GM18951 (cell line): ENCODE measurements at regions of chr18 and their contacts with region 1.

Region 1: GRCh38 chr18:75478996-75479880 is 51.7 kb upstream of the SMIM21 start:
- POLR2A ChIP-seq: no peak

Region 2: DNA sequence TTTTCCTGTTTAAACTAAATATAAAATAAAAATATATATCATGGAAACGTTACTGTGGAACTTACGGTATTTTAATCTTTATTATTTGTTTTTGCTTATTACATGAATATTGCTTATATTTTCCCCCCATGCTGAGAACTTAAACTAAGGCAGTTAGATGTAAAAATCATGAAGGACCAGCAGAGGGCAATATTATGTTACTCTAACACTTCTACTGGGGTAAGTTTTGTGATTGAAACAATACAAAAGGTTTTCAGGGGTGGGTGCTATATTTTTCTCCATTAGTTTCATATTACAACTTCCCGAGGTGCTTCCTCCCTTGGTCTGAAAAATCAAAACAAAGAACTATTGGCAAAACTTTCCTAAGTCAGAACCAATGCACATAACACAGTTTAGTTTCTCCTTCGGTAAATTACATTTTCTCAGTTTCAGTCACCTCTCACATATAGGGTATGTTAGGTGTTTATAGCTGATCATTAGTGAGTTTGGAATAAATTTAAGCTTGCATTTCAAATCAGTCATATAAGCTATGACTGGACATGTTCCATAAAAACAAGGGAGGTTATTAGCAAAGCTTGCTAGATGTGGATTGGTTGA is 826.7 kb before region 1 on chr18:
- in situ Hi-C with region 1: loop called (anchors 25 kb)
- POLR2A ChIP-seq: no peak

Region 3: DNA sequence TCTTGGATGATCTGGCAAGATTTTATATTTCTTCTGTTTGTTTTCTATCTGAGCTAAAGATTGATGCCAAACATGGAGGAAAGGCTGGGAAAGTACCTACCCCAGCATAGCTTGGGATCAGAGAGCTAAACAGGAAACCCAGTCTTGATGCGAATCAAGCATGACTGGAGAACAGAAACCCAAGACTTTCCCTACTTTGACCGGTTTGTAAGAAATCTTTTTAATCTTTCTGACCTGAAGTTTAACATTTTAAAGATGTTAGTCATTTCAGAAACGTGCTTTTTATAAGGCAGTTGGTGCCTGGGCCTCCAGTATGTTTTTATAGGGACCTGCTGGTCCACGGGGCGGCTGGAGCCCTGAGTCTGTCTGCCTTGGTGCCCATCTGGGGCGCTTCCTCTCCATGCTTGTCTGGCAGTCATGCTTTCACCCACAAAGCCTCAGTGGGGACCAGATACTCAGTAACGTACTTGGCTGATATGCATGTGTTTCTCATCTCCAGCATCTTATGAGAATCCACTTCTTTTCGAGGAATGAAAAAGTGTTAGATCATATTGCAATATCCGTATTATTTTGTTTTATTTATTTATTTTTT is 536.8 kb before region 1 on chr18:
- in situ Hi-C with region 1: no loop called
- POLR2A ChIP-seq: no peak

Region 4: DNA sequence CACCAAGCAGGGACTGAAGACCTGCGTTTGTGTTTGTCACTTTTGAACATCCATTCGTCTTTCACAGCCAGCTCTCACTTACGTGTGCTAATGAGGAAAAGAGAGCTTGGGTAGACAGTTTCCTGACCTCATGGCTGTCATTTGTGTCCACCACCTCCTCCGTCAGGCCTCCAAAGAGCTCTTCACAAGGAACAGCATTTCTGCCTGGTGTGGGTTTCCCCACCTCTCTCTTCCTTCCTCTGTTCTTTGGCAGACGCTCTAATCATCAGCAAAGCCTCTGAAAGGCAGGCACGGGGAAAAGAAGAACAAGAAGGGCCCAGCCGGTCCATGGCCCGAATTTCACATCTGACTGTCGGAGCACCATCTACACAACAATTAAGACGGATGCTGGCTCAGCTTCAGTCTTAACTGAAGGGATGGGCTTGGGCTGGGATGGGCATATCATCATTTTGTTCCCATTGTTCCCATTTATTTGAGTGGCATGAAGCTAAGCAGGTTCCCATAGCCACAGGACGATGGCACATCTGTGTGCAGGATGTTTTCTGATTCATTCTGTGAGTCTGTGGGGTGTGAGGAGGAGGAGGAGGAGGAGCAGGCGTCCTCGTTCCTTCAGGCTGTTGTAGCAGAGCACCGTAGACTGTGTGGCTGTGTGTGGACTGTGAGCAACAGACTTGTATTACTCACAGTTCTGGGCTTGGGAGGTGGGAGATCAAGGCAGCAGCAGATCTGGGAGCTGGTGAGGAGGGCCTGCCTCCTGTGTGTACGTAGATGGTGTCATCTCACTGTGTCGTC is 202.2 kb before region 1 on chr18:
- in situ Hi-C with region 1: no loop called
- POLR2A ChIP-seq: no peak

Region 5: DNA sequence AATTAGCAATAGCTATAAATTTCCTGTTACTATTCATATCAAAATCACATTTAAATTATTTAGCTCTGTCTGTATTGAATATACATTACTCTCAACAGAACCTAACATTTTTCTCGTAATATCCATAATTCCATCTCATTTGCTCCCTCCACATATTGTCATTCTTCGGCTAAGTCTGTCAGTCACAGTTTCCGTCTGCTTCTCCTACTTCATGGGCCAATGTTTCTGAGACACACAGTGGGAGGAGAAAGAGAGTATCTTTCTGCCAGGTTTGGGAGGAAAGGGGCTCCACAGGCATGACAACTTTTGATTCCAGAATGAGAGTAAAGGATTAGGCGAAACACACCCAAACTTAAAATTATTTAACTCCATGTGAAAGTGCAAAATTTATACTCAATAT is 221.3 kb after region 1 on chr18:
- in situ Hi-C with region 1: no loop called
- POLR2A ChIP-seq: no peak